Activated CD4-positive, alpha-beta memory T cell treated with anti-CD3 and anti-CD28 coated beads for 36 hours (primary cell): ENCODE measurements at regions of chr3 and their contacts with region 1.

Region 1: DNA sequence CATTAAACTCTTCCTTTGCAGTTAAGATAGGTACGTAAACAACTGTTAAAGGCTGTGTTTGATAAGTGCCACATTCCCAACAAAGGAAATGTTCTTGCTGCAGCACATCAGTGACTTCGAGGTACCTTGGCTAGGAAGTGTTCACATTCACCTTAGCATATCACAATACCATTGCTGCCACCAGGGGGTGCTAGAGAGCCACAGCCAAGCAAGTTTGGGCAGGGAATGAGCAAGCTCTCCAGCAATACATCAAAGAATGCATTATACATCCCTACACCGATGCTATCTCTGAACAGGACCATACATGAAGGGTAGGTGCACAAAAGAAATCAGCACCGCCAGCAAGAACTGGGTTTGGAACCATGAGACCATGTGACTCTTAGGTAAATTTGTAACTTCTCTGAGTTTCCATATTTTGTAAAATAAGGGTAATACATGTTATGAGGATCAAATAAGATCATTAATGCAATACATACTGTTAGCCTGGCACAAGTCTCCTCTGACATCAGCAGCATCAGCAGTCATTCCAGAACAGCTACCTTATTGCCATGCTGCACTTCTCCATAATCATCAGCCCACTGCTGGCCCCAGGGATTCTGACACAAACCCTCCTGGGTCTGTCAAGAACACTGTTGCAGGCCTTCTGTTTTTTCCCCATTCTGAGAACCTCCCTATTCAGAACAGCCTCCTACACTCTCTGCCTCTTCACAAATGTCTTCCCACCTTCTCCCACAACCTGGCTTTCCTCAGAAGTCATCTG is 37.6 kb downstream of the RYK start:
- DNase-seq: peak; percentile 90
- H3K4me3 Mint-ChIP-seq: no peak overlapping the region
- H3K27ac Mint-ChIP-seq: no peak overlapping the region
- H3K4me1 Mint-ChIP-seq: peaks cover 23% of the 10 kb centered on the region
- H3K27me3 Mint-ChIP-seq: no peaks in the 10 kb centered on the region

Region 2: GRCh38 chr3:134232151-134232550 is 19.1 kb after region 1 on chr3:
- CTCF ChIA-PET with region 1: interaction called, 29 read pairs
- POLR2A ChIA-PET with region 1: no interaction called
- intact Hi-C with region 1: no loop called
- DNase-seq: no peak
- H3K4me3 Mint-ChIP-seq: no peak overlapping the region
- H3K27ac Mint-ChIP-seq: peak overlapping the region; percentile 5
- H3K4me1 Mint-ChIP-seq: peaks cover 57% of the 10 kb centered on the region
- H3K27me3 Mint-ChIP-seq: no peaks in the 10 kb centered on the region

Region 3: GRCh38 chr3:134250717-134251220 is 37.7 kb after region 1 on chr3 and contains the start of gene RYK:
- CTCF ChIA-PET with region 1: interaction called, 10 read pairs
- POLR2A ChIA-PET with region 1: no interaction called
- intact Hi-C with region 1: loop called (anchors 5 kb)
- DNase-seq: peak; percentile 82
- H3K4me3 Mint-ChIP-seq: peak within 1 kb of the TSS; percentile 90
- H3K27ac Mint-ChIP-seq: peak within 1 kb of the TSS; percentile 85
- H3K4me1 Mint-ChIP-seq: peaks cover 56% of the 10 kb centered on the region
- H3K27me3 Mint-ChIP-seq: peaks cover 5% of the 10 kb centered on the region
- total RNA-seq, gene RYK: 16.7 to 17.6 TPM

Region 4: DNA sequence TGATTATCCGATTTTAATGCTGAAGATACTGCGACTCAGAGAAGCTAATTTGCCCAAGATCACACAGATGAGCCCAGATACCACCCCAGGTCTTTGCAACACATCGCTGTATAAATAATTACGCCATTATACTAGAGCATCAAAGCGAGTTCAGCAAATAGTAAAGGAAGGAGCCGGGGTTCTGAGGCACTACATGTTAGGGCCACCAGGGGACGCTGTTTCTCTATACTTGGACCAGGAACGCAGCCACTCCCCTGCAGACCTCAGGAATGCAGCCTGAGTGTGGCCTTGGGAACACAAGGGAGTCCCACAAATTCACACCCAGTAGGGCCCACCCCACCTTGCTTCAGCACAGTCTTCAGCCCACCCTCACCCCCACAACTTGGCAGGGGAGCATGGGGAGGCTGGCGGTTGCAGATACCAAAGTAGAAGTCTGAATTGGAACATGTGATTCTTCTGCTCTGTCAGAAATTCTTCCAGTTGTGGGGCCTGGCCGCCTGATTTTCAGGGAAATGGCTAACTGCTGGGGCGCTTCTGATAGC is 95.3 kb after region 1 on chr3:
- CTCF ChIA-PET with region 1: interaction called, 20 read pairs
- POLR2A ChIA-PET with region 1: no interaction called
- intact Hi-C with region 1: no loop called
- DNase-seq: peak; percentile 84
- H3K4me3 Mint-ChIP-seq: no peak overlapping the region
- H3K27ac Mint-ChIP-seq: no peak overlapping the region
- H3K4me1 Mint-ChIP-seq: peaks cover 2% of the 10 kb centered on the region
- H3K27me3 Mint-ChIP-seq: peaks cover 36% of the 10 kb centered on the region

Region 5: DNA sequence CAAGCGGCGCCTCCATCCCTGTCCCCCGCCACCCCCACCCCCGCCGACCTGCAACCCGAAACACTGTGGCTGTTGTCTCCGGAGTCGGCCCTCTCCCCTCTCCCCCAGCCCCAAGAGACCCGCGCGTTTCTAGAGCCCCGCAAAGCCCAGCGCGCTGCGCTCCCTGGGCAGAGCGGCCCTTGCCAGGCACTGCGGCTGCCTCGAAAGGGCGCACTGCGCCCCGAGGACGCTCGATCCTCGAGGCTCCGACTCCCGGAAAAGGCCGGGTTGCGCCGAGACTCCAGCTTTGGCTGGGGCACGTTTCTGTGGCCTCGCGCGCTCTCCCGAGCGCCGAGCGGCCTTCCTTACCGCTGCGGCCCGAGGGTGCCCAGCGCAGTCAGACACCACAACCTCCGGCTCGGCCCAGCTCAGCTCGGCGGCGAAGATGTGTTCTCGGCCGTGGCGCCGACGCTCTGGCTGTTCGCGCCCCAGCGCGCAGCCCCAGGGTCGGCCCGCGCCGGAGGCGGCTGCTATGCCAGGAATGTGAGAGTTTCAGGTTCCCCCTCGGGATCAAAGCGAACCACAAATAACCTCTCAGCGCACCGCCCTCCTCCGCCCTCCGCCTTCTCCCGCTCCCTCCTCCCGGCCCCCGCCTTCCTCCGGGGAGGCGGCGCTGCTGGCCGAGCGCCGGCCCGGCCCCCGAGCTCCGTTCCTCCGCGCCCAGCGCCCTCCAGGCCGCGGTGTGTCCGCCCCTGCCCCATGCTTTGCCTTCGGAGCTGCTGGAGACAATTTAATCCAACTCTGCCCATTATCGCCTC is 161.1 kb after region 1 on chr3 and contains the start of gene AMOTL2:
- CTCF ChIA-PET with region 1: interaction called, 15 read pairs
- POLR2A ChIA-PET with region 1: no interaction called
- intact Hi-C with region 1: loop called (anchors 5 kb)
- DNase-seq: peak; percentile 29
- H3K4me3 Mint-ChIP-seq: peak within 1 kb of the TSS; percentile 66
- H3K27ac Mint-ChIP-seq: no peak within 1 kb of the TSS
- H3K4me1 Mint-ChIP-seq: peaks cover 8% of the 10 kb centered on the region
- H3K27me3 Mint-ChIP-seq: peaks cover 32% of the 10 kb centered on the region
- total RNA-seq, gene AMOTL2: 0.12 to 0.39 TPM